ENCODE measurements at regions of chr10 and their contacts with region 1.

Region 1: DNA sequence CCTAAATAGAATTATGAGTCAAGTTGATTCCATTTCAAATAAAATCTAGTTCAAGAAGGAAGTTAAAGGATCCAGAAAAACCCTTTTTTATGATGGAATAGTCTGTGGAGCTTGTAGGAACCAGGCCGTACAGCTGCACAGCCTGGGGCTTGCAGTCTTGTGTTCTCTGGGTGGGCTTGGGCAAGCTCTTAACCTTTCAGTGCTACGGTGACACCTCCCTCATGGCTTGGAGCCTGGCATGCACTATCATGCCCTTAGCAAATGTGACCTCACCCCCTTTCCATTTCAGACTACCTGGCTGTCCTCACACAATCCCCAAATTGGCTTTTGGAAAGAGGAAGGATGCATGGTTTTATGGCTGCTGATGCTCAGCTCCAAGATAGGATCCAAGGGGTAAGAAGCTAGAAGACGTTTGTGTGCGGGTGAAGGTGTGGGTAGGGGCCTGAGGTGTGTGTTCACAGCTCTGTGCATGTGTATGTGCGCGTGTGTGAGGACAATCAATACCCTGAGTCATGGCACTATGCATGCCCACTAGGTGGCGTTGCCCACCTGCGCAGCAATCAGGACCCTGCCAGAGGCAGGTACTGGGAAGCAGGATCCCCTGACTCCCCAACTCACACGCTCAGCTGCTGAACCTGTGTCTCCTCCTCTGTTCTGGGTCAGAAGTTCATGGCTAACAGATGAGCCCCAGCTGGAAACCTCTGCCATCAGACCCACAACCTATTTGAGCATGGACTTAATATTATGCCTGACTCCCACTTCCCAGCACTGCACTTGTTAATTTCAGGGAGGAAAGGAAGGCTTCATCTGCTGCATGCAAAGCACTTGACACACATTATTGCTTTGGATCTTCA is 113.4 kb downstream of the PTPN20 start:
- DNase-seq: no peak
- H3K4me3 ChIP-seq: no peak overlapping the region
- CTCF ChIP-seq: peak; percentile 86

Region 2: DNA sequence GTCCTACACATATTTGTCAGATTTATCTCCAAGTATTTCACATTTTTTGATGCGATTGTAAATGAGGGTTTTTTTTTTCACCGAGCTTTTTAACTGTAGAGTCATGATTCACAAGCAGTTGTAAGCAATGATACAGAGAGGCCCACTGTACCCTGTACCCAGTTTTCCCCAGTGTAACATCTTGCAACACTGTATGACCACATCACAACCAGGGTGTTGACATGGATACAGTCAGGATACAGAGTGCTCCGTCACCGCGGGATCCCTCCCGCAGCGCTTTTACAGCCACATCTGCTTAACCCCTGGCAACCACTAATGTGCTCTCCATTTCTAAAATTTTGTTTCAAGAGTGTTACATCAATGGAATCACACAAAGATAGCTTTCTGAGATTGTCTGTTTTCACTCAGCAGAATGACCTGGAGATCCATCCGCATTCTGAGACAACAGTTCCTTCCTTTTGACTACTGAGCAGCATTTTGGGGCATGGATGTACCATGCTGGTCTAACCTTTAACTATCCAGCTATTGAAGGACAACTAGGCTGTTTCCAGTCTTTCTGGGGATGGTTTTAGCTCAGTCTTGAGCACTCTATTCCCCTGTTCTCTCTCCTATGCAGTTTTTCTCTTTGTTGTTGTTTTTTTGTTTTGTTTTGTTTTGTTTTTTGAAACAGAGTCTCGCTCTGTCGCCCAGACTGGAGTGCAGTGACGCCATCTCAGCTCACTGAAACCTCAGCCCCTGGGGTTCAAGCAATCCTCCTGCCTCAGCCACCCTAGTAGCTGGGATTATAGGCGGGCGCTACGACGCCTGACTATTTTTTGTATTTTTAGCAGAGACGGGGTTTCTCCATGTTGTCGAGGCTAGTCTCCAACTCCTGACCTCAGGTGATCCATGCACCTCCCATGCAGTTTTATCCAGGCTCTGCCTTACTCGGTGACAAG is 494.1 kb before region 1 on chr10:
- CTCF ChIA-PET with region 1: no interaction called
- POLR2A ChIA-PET with region 1: no interaction called
- DNase-seq: peak; percentile 97
- H3K4me3 ChIP-seq: no peak overlapping the region
- CTCF ChIP-seq: no peak

Region 3: GRCh38 chr10:46992803-46993561 is 31.6 kb before region 1 on chr10:
- CTCF ChIA-PET with region 1: interaction called, 14 read pairs
- POLR2A ChIA-PET with region 1: no interaction called
- DNase-seq: no peak
- H3K4me3 ChIP-seq: no peak overlapping the region
- CTCF ChIP-seq: peak; percentile 41

Region 4: DNA sequence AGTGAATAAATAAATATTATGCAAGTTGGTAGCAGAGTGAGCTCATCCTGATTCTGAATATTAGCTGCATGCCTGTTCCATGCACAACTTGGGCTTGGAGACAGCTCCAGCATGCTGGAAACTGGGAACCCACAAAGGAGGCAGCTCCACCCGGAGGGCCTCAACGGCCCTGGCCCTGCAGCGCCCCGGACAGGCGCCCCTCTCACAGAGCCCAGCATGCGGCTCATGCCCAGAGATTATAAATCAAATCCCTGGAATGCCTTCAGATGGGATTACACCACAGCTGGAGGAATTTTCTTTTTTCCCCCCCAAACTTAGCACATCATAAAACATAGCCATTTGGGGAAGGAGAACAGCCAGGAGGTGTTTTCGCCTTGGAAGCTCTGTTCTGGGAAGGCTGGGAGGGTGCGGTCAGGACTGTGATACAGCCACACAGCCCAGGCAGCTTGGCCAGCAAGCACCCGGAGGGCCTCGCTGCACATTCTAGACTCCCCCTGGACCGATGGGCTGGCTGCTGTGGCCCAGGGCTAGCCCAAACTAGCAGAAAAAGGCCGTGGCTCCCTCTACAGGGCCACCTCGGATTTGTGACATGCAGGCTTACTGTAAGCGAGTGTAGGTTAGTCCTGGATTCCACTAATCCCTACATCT is 11.0 kb before region 1 on chr10:
- CTCF ChIA-PET with region 1: interaction called, 17 read pairs
- POLR2A ChIA-PET with region 1: no interaction called
- DNase-seq: no peak
- H3K4me3 ChIP-seq: no peak overlapping the region
- CTCF ChIP-seq: no peak

Region 5: GRCh38 chr10:47076949-47077361 is 52.3 kb after region 1 on chr10:
- CTCF ChIA-PET with region 1: no interaction called
- POLR2A ChIA-PET with region 1: no interaction called
- DNase-seq: no peak
- H3K4me3 ChIP-seq: no peak overlapping the region
- CTCF ChIP-seq: no peak

Region 6: GRCh38 chr10:47109906-47110305 is 85.3 kb after region 1 on chr10:
- CTCF ChIA-PET with region 1: no interaction called
- POLR2A ChIA-PET with region 1: no interaction called
- DNase-seq: no peak
- H3K4me3 ChIP-seq: no peak overlapping the region
- CTCF ChIP-seq: no peak

Region 7: GRCh38 chr10:47340608-47341170 is 316.1 kb after region 1 on chr10:
- CTCF ChIA-PET with region 1: interaction called, 14 read pairs
- POLR2A ChIA-PET with region 1: no interaction called
- DNase-seq: no peak
- H3K4me3 ChIP-seq: no peak overlapping the region
- CTCF ChIP-seq: peak; percentile 90

Measured in AG04449 (cell line).